Activated CD4-positive, alpha-beta memory T cell treated with anti-CD3 and anti-CD28 coated beads for 36 hours (primary cell): ENCODE measurements at regions of chr17 and their contacts with region 1.

Region 1: DNA sequence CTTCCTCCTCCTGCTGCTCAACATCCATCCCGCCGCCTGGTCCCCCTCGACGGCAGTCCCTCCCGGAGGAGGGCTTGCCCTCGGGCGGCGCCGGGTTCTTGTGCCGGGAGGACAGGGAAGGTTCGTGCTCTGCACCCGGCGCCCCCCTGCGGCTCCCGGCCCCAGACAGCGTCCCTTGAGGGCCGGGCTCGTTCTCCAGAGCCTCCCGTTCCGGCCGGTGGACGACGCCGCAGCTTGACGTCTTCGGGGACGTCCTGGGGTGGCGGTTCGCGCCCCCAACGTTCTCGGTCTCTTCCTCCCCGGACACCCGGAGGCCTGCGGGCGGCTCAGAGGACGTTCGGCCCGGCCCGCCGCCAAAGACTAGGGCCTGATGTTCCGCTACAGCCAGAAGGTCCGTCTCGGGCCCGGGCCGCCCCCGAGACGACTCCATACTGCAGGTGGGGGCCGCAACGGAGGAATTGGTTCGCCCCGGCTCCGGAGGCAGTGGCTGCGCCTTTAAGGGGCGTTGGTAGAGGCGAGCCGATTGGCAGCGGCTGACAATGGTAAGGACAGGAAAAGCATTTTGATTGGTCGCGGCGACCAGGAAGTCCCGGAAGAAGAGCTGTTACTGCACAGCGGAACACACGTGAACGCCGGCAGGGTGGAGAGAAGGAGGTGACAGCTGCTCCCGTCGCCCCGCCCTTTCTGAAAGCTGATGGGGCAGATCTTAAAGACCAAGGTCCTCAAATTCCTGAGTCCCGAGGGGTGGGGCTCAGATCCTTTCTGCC is at the start of gene BORCS6:
- DNase-seq: peak; percentile 98
- H3K4me3 Mint-ChIP-seq: no peak within 1 kb of the TSS
- H3K27ac Mint-ChIP-seq: peak within 1 kb of the TSS; percentile 93
- H3K4me1 Mint-ChIP-seq: peaks cover 10% of the 10 kb centered on the region
- H3K27me3 Mint-ChIP-seq: no peaks in the 10 kb centered on the region
- total RNA-seq, gene BORCS6: 7.9 to 8.3 TPM

Region 2: GRCh38 chr17:8138672-8139371 is 51.1 kb before region 1 on chr17:
- CTCF ChIA-PET with region 1: interaction called, 5 read pairs
- POLR2A ChIA-PET with region 1: interaction called, 3 read pairs
- intact Hi-C with region 1: loop called (anchors 1 kb)
- DNase-seq: peak; percentile 98
- H3K4me3 Mint-ChIP-seq: no peak overlapping the region
- H3K27ac Mint-ChIP-seq: no peak overlapping the region
- H3K4me1 Mint-ChIP-seq: peaks cover 2% of the 10 kb centered on the region
- H3K27me3 Mint-ChIP-seq: peaks cover 1% of the 10 kb centered on the region

Region 3: DNA sequence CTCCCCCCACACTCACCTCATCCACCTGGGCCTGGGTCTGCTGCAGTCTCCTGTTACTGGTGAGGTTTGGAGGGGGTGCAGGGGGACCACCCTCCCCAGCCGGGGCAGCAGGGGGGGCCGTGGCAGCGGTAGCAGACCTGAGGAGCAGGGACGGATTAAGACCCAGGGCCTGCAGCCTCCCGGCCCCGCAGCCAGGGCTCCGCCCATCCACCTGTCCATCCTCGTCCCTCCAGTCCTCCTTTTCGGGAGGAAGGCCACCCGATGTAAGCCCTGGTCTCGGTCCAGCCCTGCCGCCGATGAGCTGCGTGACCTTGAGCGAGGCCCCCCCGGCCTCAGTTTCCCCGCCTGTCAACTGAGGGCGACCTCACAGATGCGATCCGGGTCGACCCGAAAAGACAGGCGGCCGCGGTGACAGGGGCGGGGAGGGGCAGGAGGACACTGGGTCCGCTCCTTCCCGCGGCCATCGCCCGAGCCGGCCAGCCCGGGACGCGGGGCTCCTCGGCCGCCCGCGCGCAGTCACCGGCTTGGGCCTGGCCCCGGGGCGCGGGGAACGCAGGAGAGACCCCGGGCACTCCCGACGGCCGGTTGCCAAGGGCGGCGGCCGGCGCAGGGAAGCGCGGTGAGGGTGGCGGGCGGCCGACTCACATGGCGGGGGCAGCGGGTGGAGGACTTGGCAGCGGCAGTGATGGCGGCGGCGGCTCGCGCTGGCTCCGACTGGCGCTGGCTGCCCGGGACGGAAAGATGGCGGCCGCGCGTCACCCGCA is 27.5 kb before region 1 on chr17 and contains the start of gene VAMP2:
- CTCF ChIA-PET with region 1: interaction called, 4 read pairs
- POLR2A ChIA-PET with region 1: interaction called, 6 read pairs
- intact Hi-C with region 1: loop called (anchors 1 kb)
- DNase-seq: peak; percentile 88
- H3K4me3 Mint-ChIP-seq: peak within 1 kb of the TSS; percentile 86
- H3K27ac Mint-ChIP-seq: peak within 1 kb of the TSS; percentile 95
- H3K4me1 Mint-ChIP-seq: peaks cover 52% of the 10 kb centered on the region
- H3K27me3 Mint-ChIP-seq: no peaks in the 10 kb centered on the region
- total RNA-seq, gene VAMP2: 30.1 to 30.4 TPM

Region 4: GRCh38 chr17:8204761-8205555 is 15.1 kb after region 1 on chr17:
- CTCF ChIA-PET with region 1: interaction called, 3 read pairs
- POLR2A ChIA-PET with region 1: interaction called, 17 read pairs
- intact Hi-C with region 1: loop called (anchors 1 kb)
- DNase-seq: no peak
- H3K4me3 Mint-ChIP-seq: no peak overlapping the region
- H3K27ac Mint-ChIP-seq: no peak overlapping the region
- H3K4me1 Mint-ChIP-seq: peaks cover 17% of the 10 kb centered on the region
- H3K27me3 Mint-ChIP-seq: no peaks in the 10 kb centered on the region

Region 5: DNA sequence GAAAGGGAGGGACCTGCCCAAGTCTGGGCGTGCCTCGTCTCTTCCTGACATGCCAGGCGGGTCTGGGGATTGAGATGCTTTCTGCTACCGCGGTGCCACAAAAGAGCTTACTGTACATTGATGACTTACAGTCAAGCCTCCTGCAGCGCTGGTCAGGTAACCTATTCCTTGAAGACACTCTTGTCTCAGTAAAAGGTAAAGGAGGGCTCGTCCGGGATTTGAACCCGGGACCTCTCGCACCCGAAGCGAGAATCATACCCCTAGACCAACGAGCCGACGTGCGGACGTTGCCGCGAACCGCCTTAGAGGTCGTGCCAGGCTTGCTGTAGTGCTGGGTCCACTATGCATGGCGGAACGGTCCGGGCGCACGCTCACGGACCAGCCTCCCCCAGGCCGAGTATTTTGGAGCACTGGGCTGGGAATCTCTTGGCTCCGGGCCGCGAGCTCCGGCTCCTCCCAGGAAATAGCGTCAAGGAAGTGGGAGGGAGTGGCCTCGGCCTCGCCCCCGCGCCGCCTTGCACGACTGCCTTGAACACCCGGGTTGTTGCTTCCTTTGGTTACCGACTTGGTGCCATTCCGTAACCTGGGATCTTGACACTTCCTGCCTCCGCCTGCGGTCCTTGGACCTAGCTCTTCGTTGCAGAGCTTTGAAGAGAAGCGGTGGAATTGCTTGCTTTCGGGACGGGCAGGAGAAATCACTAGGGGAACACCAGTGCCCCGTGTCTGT is 32.9 kb after region 1 on chr17:
- CTCF ChIA-PET with region 1: interaction called, 48 read pairs
- POLR2A ChIA-PET with region 1: interaction called, 42 read pairs
- intact Hi-C with region 1: loop called (anchors 1 kb)
- DNase-seq: peak; percentile 94
- H3K4me3 Mint-ChIP-seq: peak overlapping the region; percentile 98
- H3K27ac Mint-ChIP-seq: peak overlapping the region; percentile 98
- H3K4me1 Mint-ChIP-seq: peaks cover 47% of the 10 kb centered on the region
- H3K27me3 Mint-ChIP-seq: peaks cover 14% of the 10 kb centered on the region

Region 6: DNA sequence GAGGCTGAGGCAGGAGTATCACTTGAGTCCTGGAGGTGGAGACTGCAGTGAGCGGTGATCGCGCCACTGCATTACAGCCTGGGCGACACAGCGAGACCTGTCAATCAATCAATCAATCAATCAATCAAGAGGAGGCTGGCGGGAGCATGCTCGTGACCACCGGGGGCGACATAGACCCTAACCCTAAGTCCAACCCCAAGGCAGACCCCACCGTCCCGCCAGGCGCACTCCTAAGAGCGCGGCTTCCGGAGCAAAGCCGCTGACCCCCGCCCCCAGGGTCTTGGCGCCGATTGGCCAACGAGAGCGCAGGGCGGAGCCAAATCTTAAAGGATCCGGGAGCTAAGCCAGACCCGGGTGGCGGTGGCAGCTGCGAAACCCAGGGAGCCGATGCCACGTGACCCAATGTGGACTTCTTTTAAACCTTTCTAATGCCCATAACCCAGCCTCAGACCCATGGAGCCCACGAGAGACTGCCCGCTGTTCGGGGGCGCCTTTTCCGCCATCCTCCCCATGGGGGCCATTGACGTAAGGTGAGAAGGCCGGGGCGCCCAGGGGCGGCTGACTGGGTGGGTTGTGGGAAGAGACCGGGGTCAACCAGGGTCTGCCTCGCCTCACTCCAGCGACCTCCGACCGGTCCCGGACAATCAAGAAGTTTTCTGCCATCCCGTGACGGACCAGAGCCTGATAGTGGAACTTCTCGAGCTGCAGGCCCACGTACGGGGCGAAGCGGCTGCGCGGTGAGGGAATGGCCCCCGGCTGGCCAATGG is 98.6 kb after region 1 on chr17 and contains the start of gene RANGRF:
- CTCF ChIA-PET with region 1: no interaction called
- POLR2A ChIA-PET with region 1: interaction called, 4 read pairs
- intact Hi-C with region 1: loop called (anchors 2 kb)
- DNase-seq: peak; percentile 91
- H3K4me3 Mint-ChIP-seq: peak within 1 kb of the TSS; percentile 93
- H3K27ac Mint-ChIP-seq: peak within 1 kb of the TSS; percentile 95
- H3K4me1 Mint-ChIP-seq: peaks cover 31% of the 10 kb centered on the region
- H3K27me3 Mint-ChIP-seq: no peaks in the 10 kb centered on the region
- total RNA-seq, gene RANGRF: 41.7 to 45.5 TPM

Region 7: GRCh38 chr17:8354236-8354635 is 164.3 kb after region 1 on chr17:
- CTCF ChIA-PET with region 1: no interaction called
- POLR2A ChIA-PET with region 1: no interaction called
- intact Hi-C with region 1: no loop called
- DNase-seq: no peak
- H3K4me3 Mint-ChIP-seq: no peak overlapping the region
- H3K27ac Mint-ChIP-seq: no peak overlapping the region
- H3K4me1 Mint-ChIP-seq: no peaks in the 10 kb centered on the region
- H3K27me3 Mint-ChIP-seq: peaks cover 3% of the 10 kb centered on the region